PC-3 (cell line): ENCODE measurements at regions of chr4 and their contacts with region 1.

Region 1: GRCh38 chr4:7067452-7068278 is at the start of gene GRPEL1:
- DNase-seq: peak; percentile 99
- ATAC-seq: peak; percentile 86
- H3K4me3 ChIP-seq: peak within 1 kb of the TSS; percentile 96
- H3K27ac ChIP-seq: peak within 1 kb of the TSS; percentile 72
- H3K4me1 ChIP-seq: peaks cover 17% of the 10 kb centered on the region; the same call in 1 of the 2 replicates
- H3K27me3 ChIP-seq: no peaks in the 10 kb centered on the region
- CTCF ChIP-seq: no peak; the same call in 1 of the 2 replicates
- total RNA-seq, gene GRPEL1: 74.5 and 121 TPM in 2 replicates

Region 2: GRCh38 chr4:6909073-6909965 is 158.3 kb before region 1 on chr4 and contains the start of gene TBC1D14:
- CTCF ChIA-PET with region 1: no interaction called
- POLR2A ChIA-PET with region 1: interaction called, 3 read pairs
- intact Hi-C with region 1: loop called (anchors 5 kb)
- DNase-seq: peak; percentile 66
- ATAC-seq: peak; percentile 85
- H3K4me3 ChIP-seq: peak within 1 kb of the TSS; percentile 78
- H3K27ac ChIP-seq: peak within 1 kb of the TSS; percentile 77
- H3K4me1 ChIP-seq: peaks cover 8% of the 10 kb centered on the region
- H3K27me3 ChIP-seq: no peaks in the 10 kb centered on the region
- CTCF ChIP-seq: no peak
- total RNA-seq, gene TBC1D14: 33.0 and 33.3 TPM in 2 replicates

Region 3: GRCh38 chr4:6974138-6974848 is 93.4 kb before region 1 on chr4:
- CTCF ChIA-PET with region 1: interaction called, 5 read pairs
- POLR2A ChIA-PET with region 1: no interaction called
- intact Hi-C with region 1: loop called (anchors 1 kb)
- DNase-seq: peak; percentile 83
- ATAC-seq: peak; percentile 67
- H3K4me3 ChIP-seq: no peak overlapping the region
- H3K27ac ChIP-seq: no peak overlapping the region
- H3K4me1 ChIP-seq: no peaks in the 10 kb centered on the region
- H3K27me3 ChIP-seq: no peaks in the 10 kb centered on the region
- CTCF ChIP-seq: peak; percentile 83

Region 4: GRCh38 chr4:6986781-6987587 is 80.7 kb before region 1 on chr4:
- CTCF ChIA-PET with region 1: interaction called, 4 read pairs
- POLR2A ChIA-PET with region 1: no interaction called
- intact Hi-C with region 1: loop called (anchors 5 kb)
- DNase-seq: peak; percentile 86
- ATAC-seq: peak; percentile 69
- H3K4me3 ChIP-seq: peak overlapping the region; percentile 99
- H3K27ac ChIP-seq: peak overlapping the region; percentile 81
- H3K4me1 ChIP-seq: peaks cover 41% of the 10 kb centered on the region
- H3K27me3 ChIP-seq: no peaks in the 10 kb centered on the region
- CTCF ChIP-seq: no peak

Region 5: GRCh38 chr4:7034262-7035091 is 33.2 kb before region 1 on chr4:
- CTCF ChIA-PET with region 1: no interaction called
- POLR2A ChIA-PET with region 1: interaction called, 14 read pairs
- intact Hi-C with region 1: no loop called
- DNase-seq: peak; percentile 88
- ATAC-seq: peak; percentile 92
- H3K4me3 ChIP-seq: no peak overlapping the region; the same call in 1 of the 2 replicates
- H3K27ac ChIP-seq: peak overlapping the region; percentile 71
- H3K4me1 ChIP-seq: peaks cover 29% of the 10 kb centered on the region
- H3K27me3 ChIP-seq: no peaks in the 10 kb centered on the region
- CTCF ChIP-seq: no peak

Region 6: DNA sequence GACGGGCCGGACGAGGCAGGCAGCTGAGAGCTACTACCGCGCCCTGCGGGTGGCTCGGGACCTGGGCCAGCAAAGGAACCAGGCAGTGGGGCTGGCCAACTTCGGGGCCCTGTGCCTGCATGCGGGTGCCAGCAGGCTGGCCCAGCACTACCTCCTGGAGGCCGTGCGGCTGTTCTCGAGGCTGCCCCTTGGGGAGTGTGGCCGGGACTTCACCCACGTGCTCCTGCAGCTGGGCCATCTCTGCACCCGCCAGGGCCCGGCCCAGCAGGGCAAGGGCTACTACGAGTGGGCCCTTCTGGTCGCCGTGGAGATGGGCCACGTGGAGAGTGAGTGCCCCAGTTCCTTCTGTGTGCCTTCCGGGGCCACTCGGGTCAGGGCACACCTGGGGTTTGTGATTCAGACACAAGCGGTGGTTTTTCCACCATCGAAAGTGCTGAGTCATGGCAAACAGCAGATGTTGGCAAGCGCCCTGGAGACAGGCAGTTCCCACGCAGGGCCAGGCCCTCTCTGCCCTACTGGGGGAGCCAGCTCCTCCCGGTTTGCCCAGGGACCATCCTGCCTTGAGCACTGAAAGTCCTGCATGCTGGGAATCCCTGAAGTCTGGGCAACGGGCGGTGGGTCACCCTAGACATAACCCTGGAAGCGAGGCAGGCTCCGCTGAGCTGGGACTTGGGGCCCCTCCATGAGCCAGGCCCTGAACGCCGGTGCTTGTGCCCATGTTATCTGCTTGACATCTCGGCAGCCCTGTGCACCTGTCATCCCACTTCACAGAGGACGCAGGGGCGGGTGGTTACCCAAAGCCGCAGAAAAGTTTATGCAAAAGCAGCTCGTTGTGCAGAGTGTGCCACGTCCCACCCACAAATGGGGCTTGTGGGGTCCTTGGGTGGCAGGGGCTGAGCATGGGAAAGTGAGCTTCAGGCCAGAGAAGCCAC is 1160.9 kb after region 1 on chr4:
- CTCF ChIA-PET with region 1: no interaction called
- POLR2A ChIA-PET with region 1: no interaction called
- intact Hi-C with region 1: no loop called
- DNase-seq: peak; percentile 71
- ATAC-seq: peak; percentile 72
- H3K4me3 ChIP-seq: no peak overlapping the region
- H3K27ac ChIP-seq: peak overlapping the region; percentile 64
- H3K4me1 ChIP-seq: peaks cover 13% of the 10 kb centered on the region
- H3K27me3 ChIP-seq: no peaks in the 10 kb centered on the region
- CTCF ChIP-seq: no peak